Activated CD4-positive, alpha-beta memory T cell treated with anti-CD3 and anti-CD28 coated beads, Interleukin-2, amount 10 ng/mL, durations not matched to agents 7 days and 5 days (primary cell): ENCODE measurements at regions of chr12 and their contacts with region 1.

Region 1: DNA sequence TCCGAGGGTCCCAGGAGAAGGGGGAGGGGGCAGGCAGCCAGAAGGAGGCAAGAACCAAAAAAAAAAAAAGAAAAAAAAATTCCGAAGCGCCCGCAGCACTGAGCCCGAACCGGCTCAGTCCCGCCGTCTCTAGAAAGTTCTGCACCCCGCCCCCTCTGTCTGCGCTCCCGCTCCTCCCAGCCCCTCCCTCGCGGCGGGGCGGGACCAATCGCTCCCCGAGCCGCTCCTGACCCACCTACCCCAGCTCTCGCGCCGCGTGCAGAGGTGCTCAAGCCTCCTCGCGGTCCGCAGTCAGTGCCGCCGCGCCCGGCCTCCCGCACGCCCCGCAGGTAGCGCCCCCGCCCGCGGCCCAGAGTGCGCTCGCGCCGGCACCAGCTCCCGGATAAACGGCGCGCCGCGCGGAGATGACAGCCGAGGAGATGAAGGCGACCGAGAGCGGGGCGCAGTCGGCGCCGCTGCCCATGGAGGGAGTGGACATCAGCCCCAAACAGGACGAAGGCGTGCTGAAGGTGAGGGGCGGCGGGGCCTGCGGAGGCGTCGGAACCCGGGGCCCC is at the start of gene FKBP4:
- DNase-seq: peak; percentile 90
- H3K4me3 Mint-ChIP-seq: peak within 1 kb of the TSS; percentile 90
- H3K27ac Mint-ChIP-seq: peak within 1 kb of the TSS; percentile 66
- H3K4me1 Mint-ChIP-seq: peaks cover 21% of the 10 kb centered on the region
- H3K27me3 Mint-ChIP-seq: peaks cover 17% of the 10 kb centered on the region
- total RNA-seq, gene FKBP4: 62.6 to 70.7 TPM

Region 2: GRCh38 chr12:2682296-2683251 is 112.2 kb before region 1 on chr12:
- CTCF ChIA-PET with region 1: interaction called, 11 read pairs
- POLR2A ChIA-PET with region 1: interaction called, 4 read pairs
- DNase-seq: peak; percentile 61
- H3K4me3 Mint-ChIP-seq: peak overlapping the region; percentile 49
- H3K27ac Mint-ChIP-seq: peak overlapping the region; percentile 70
- H3K4me1 Mint-ChIP-seq: peaks cover 11% of the 10 kb centered on the region
- H3K27me3 Mint-ChIP-seq: no peaks in the 10 kb centered on the region

Region 3: GRCh38 chr12:2691006-2691344 is 103.8 kb before region 1 on chr12:
- CTCF ChIA-PET with region 1: interaction called, 13 read pairs
- POLR2A ChIA-PET with region 1: interaction called, 35 read pairs
- DNase-seq: peak; percentile 65
- H3K4me3 Mint-ChIP-seq: peak overlapping the region; percentile 82
- H3K27ac Mint-ChIP-seq: peak overlapping the region; percentile 85
- H3K4me1 Mint-ChIP-seq: peaks cover 29% of the 10 kb centered on the region
- H3K27me3 Mint-ChIP-seq: peaks cover 19% of the 10 kb centered on the region

Region 4: DNA sequence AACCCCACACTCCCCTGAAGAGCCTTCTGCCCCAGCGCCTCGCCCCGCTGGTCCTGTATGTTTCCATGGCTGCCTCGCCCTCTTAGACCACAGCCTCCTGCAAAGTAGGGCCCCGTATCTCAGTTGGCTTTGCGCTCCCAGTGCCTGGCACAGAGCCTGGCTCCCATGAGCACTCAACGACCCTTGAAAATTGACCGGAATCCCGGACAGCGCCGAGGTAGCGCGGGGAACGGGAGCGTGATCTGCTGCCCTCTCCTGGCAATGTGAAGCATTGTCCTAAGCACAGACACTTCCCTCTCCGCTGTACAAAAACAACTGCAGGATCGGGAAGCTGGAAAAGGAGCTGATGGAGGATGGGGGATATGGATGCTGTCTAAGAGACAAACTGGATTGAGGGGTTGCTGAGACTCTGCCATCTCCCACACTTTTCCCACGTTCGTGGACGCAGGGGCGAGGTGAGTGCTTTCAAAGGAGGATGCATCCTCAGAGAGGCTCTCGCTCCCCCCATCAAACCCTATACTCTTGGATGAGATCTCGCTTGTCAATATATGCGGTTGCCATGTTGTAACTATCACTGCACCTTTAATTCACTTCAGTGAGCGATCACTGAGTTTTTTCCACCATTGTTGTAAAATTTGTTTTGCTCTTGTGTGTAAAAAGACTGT is 10.7 kb before region 1 on chr12:
- CTCF ChIA-PET with region 1: interaction called, 22 read pairs
- POLR2A ChIA-PET with region 1: interaction called, 4 read pairs
- DNase-seq: peak; percentile 44
- H3K4me3 Mint-ChIP-seq: no peak overlapping the region
- H3K27ac Mint-ChIP-seq: no peak overlapping the region
- H3K4me1 Mint-ChIP-seq: peaks cover 9% of the 10 kb centered on the region
- H3K27me3 Mint-ChIP-seq: peaks cover 27% of the 10 kb centered on the region

Region 5: GRCh38 chr12:2812290-2813213 is 17.7 kb after region 1 on chr12 and contains the start of gene ITFG2:
- CTCF ChIA-PET with region 1: interaction called, 7 read pairs
- POLR2A ChIA-PET with region 1: interaction called, 36 read pairs
- DNase-seq: peak; percentile 98
- H3K4me3 Mint-ChIP-seq: peak within 1 kb of the TSS; percentile 99
- H3K27ac Mint-ChIP-seq: peak within 1 kb of the TSS; percentile 97
- H3K4me1 Mint-ChIP-seq: peaks cover 27% of the 10 kb centered on the region
- H3K27me3 Mint-ChIP-seq: no peaks in the 10 kb centered on the region
- total RNA-seq, gene ITFG2: 25.9 to 29.5 TPM